CD4-positive, alpha-beta T cell (primary cell): ENCODE measurements at regions of chr2 and their contacts with region 1.

Region 1: DNA sequence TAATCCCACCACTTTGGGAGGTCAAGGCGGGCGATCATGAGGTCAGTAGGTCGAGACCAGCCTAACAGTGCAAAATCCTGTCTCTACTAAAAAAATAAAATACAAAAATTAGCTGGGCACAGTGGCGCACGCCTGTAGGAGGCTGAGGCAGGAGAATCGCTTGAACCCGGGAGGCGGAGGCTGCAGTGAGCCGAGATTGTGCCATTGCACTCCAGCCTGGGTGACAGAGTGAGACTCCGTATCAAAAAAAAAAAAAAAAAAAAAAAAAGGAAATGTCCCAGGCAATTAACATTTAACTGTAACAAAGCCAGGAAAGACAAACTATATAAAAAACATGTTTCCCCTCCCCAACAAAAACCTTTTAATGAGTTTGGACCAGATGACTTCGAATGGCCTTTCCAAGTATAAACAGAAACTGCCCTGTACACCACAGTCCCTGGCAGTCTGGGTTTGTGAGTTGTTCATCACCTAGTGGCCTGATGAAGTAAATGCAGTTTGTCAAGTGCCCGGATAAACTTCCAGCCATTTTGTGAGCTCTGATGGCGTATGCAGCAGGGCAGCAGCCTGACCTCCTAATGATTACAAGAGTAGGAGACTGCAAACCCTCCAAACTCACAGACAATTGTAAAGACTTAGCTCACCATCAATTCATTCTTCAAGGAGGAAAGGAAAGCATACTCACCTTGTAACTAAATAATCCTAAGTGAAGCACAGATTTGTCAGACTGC is 16.6 kb upstream of the PCBP1 start:
- DNase-seq: peak; percentile 30 to 89 (median 47)
- ATAC-seq: peak; percentile 72
- H3K4me3 ChIP-seq: peak overlapping the region; percentile 24
- H3K4me3 Mint-ChIP-seq: peak overlapping the region; percentile 83
- H3K27ac ChIP-seq: peak overlapping the region; percentile 40 to 84
- H3K27ac Mint-ChIP-seq: peak overlapping the region; percentile 86
- H3K4me1 ChIP-seq: peaks cover 46% of the 10 kb centered on the region
- H3K4me1 Mint-ChIP-seq: peaks cover 61% of the 10 kb centered on the region
- H3K27me3 ChIP-seq: no peaks in the 10 kb centered on the region
- H3K27me3 Mint-ChIP-seq: no peaks in the 10 kb centered on the region
- CTCF ChIP-seq: peak; percentile 80

Region 2: GRCh38 chr2:69946351-69947077 is 124.2 kb before region 1 on chr2:
- CTCF ChIA-PET with region 1: interaction called, 3 read pairs
- POLR2A ChIA-PET with region 1: interaction called, 3 read pairs
- intact Hi-C with region 1: loop called in 1 of 2 experiments (anchors 10 kb)
- DNase-seq: peak; percentile 24 to 87 (median 42)
- ATAC-seq: peak; percentile 93
- H3K4me3 ChIP-seq: peak overlapping the region; percentile 24
- H3K4me3 Mint-ChIP-seq: peak overlapping the region; percentile 3
- H3K27ac ChIP-seq: peak overlapping the region; percentile 3 to 61
- H3K27ac Mint-ChIP-seq: peak overlapping the region; percentile 54
- H3K4me1 ChIP-seq: peaks cover 38% of the 10 kb centered on the region
- H3K4me1 Mint-ChIP-seq: peaks cover 37% of the 10 kb centered on the region
- H3K27me3 ChIP-seq: no peaks in the 10 kb centered on the region
- H3K27me3 Mint-ChIP-seq: no peaks in the 10 kb centered on the region
- CTCF ChIP-seq: no peak

Region 3: GRCh38 chr2:70086838-70087701 is 16.4 kb after region 1 on chr2 and contains the start of gene PCBP1:
- CTCF ChIA-PET with region 1: interaction called, 35 read pairs
- POLR2A ChIA-PET with region 1: interaction called, 235 read pairs
- intact Hi-C with region 1: loop called (anchors 1 to 2 kb)
- DNase-seq: peak; percentile 95 to 99 (median 98)
- ATAC-seq: peak; percentile 55
- H3K4me3 ChIP-seq: peak within 1 kb of the TSS; percentile 66
- H3K4me3 Mint-ChIP-seq: peak within 1 kb of the TSS; percentile 92
- H3K27ac ChIP-seq: peak within 1 kb of the TSS; percentile 100
- H3K27ac Mint-ChIP-seq: peak within 1 kb of the TSS; percentile 100
- H3K4me1 ChIP-seq: peaks cover 74% of the 10 kb centered on the region
- H3K4me1 Mint-ChIP-seq: peaks cover 76% of the 10 kb centered on the region
- H3K27me3 ChIP-seq: no peaks in the 10 kb centered on the region
- H3K27me3 Mint-ChIP-seq: peaks cover 4% of the 10 kb centered on the region
- CTCF ChIP-seq: no peak
- total RNA-seq, gene PCBP1: 228 to 233 TPM

Region 4: DNA sequence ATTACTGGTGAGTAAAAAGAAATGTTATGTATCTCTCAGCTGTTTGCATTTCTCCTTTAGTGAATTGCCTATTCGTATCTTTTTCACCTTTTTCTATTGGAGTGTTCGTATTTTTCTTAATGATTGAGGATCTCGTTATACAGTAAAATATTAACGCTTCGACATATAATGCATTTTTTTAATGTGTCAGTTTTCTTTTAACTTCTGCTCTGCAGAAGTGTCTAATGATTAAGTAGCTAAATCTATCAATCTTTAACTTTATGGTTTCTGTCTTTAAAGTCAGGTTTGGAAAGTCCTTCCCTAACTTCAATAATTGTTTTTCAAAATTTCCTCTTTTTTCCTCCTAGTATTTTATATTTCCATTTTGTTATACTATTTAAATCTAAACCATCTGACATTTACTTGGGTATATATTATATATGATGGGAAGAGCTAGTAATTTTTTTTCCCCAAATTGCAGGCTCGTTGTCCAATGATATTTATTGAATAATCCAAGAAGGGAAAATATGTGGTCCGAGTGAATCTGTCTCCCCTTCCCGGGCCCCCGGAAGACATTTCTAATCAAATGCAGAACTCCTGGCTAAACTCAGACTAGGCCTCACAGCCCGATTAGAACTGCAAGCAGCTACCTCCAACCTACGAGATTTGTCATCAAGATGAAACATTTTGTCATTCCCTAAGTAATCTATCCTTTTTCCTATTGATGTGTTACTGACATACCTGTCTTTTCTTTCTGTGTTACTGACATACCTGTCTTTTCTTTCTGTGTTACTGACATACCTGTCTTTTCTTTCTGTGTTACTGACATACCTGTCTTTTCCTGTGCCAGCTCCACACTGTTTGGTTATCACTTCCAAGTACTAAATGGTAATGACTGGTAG is 33.8 kb after region 1 on chr2:
- CTCF ChIA-PET with region 1: interaction called, 4 read pairs
- POLR2A ChIA-PET with region 1: interaction called, 11 read pairs
- intact Hi-C with region 1: no loop called
- DNase-seq: peak in 4 of 14 experiments; percentile 38 to 70 (median 55)
- ATAC-seq: no peak
- H3K4me3 ChIP-seq: peak overlapping the region; percentile 18
- H3K4me3 Mint-ChIP-seq: peak overlapping the region; percentile 83
- H3K27ac ChIP-seq: peak overlapping the region; percentile 66 to 70
- H3K27ac Mint-ChIP-seq: peak overlapping the region; percentile 96
- H3K4me1 ChIP-seq: peaks cover 41% of the 10 kb centered on the region
- H3K4me1 Mint-ChIP-seq: peaks cover 52% of the 10 kb centered on the region
- H3K27me3 ChIP-seq: no peaks in the 10 kb centered on the region
- H3K27me3 Mint-ChIP-seq: no peaks in the 10 kb centered on the region
- CTCF ChIP-seq: no peak

Region 5: GRCh38 chr2:70132244-70133126 is 61.8 kb after region 1 on chr2:
- CTCF ChIA-PET with region 1: interaction called, 8 read pairs
- POLR2A ChIA-PET with region 1: interaction called, 55 read pairs
- intact Hi-C with region 1: no loop called
- DNase-seq: peak in 8 of 14 experiments; percentile 34 to 80 (median 60)
- ATAC-seq: peak; percentile 62
- H3K4me3 ChIP-seq: peak overlapping the region; percentile 54
- H3K4me3 Mint-ChIP-seq: peak overlapping the region; percentile 83
- H3K27ac ChIP-seq: peak overlapping the region; percentile 76 to 84
- H3K27ac Mint-ChIP-seq: peak overlapping the region; percentile 96
- H3K4me1 ChIP-seq: peaks cover 88% of the 10 kb centered on the region
- H3K4me1 Mint-ChIP-seq: peaks cover 72% of the 10 kb centered on the region
- H3K27me3 ChIP-seq: no peaks in the 10 kb centered on the region
- H3K27me3 Mint-ChIP-seq: no peaks in the 10 kb centered on the region
- CTCF ChIP-seq: no peak

Region 6: GRCh38 chr2:70190418-70191243 is 119.9 kb after region 1 on chr2 and contains the start of gene C2orf42:
- CTCF ChIA-PET with region 1: interaction called, 3 read pairs
- POLR2A ChIA-PET with region 1: interaction called, 27 read pairs
- intact Hi-C with region 1: no loop called
- DNase-seq: peak; percentile 89 to 98 (median 92)
- ATAC-seq: peak; percentile 81
- H3K4me3 ChIP-seq: peak within 1 kb of the TSS; percentile 88
- H3K4me3 Mint-ChIP-seq: peak within 1 kb of the TSS; percentile 91
- H3K27ac ChIP-seq: peak within 1 kb of the TSS; percentile 95 to 98
- H3K27ac Mint-ChIP-seq: peak within 1 kb of the TSS; percentile 95
- H3K4me1 ChIP-seq: peaks cover 7% of the 10 kb centered on the region
- H3K4me1 Mint-ChIP-seq: peaks cover 12% of the 10 kb centered on the region
- H3K27me3 ChIP-seq: no peaks in the 10 kb centered on the region
- H3K27me3 Mint-ChIP-seq: no peaks in the 10 kb centered on the region
- CTCF ChIP-seq: peak; percentile 21
- total RNA-seq, gene C2orf42: 16.9 to 18.4 TPM

Region 7: DNA sequence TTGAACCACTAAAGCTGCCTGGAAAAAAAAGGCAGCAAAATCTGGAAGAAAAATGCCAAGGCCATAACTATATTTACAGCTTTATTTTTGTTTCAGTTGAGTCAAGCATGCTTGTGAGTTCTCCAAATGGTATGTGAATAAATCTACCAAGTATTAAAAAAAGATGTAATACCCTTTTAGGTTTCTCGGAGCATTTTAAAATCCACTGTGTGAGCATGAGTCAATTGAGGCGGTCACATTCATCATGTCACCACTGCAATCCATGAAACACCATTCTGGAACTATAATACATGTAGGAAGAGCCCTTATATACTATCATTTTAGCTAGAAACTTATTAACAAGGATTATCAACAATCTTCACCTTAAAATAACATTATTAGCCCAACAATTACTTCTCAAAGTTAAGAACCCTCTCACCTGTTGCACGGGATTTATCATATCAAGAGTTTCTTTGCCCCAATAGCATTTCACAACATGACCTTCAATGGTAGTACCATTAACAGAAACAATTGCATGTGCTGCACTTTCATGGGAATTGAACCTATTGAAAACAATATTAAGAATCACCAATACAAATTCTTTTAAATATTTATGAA is 144.3 kb after region 1 on chr2:
- CTCF ChIA-PET with region 1: no interaction called
- POLR2A ChIA-PET with region 1: no interaction called
- intact Hi-C with region 1: no loop called
- DNase-seq: no peak
- ATAC-seq: no peak
- H3K4me3 ChIP-seq: no peak overlapping the region
- H3K4me3 Mint-ChIP-seq: no peak overlapping the region
- H3K27ac ChIP-seq: no peak overlapping the region
- H3K27ac Mint-ChIP-seq: no peak overlapping the region
- H3K4me1 ChIP-seq: no peaks in the 10 kb centered on the region
- H3K4me1 Mint-ChIP-seq: peaks cover 10% of the 10 kb centered on the region
- H3K27me3 ChIP-seq: no peaks in the 10 kb centered on the region
- H3K27me3 Mint-ChIP-seq: no peaks in the 10 kb centered on the region
- CTCF ChIP-seq: no peak